MCF 10A (cell line): ENCODE measurements at regions of chr7 and their contacts with region 1.

Region 1: DNA sequence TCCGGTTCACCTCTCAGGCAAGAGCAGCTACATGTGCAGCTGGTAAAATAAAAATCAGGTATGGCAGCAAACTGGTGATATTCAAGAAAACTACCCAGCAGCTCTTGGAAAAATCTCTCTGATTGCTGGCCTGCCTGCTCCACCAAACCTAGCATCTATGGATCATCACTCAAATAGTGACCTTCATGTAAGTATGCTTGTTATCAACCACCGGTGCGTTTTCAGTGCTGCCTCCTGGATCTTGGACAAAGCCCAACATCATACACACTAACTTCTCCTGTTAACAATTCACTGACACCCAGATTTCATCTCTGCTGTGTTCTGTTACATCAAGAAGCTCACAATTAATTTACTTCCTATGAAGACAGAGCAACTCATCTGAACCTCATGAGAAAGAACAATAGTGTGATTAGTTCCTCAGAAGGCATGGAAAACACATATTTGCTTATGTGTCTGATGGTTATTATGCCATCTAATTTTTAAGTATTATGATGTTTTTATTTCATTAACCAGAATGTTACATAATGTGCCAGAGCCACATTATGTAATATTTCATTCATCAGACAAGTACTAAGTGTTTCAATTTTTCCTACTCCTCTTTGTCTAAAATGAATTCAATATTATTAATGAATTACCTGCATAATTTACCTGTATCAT is 8.8 kb downstream of the CDK6 start:
- DNase-seq: no peak
- H3K4me3 Mint-ChIP-seq: no peak overlapping the region
- H3K27ac Mint-ChIP-seq: peak overlapping the region; percentile 3
- H3K4me1 Mint-ChIP-seq: peaks cover 64% of the 10 kb centered on the region
- H3K27me3 Mint-ChIP-seq: no peaks in the 10 kb centered on the region
- CTCF ChIP-seq: no peak

Region 2: GRCh38 chr7:92815412-92815811 is 12.2 kb before region 1 on chr7:
- CTCF ChIA-PET with region 1: interaction called, 16 read pairs
- POLR2A ChIA-PET with region 1: interaction called, 23 read pairs
- intact Hi-C with region 1: no loop called
- DNase-seq: no peak
- H3K4me3 Mint-ChIP-seq: no peak overlapping the region
- H3K27ac Mint-ChIP-seq: no peak overlapping the region
- H3K4me1 Mint-ChIP-seq: peaks cover 18% of the 10 kb centered on the region
- H3K27me3 Mint-ChIP-seq: no peaks in the 10 kb centered on the region
- CTCF ChIP-seq: no peak

Region 3: DNA sequence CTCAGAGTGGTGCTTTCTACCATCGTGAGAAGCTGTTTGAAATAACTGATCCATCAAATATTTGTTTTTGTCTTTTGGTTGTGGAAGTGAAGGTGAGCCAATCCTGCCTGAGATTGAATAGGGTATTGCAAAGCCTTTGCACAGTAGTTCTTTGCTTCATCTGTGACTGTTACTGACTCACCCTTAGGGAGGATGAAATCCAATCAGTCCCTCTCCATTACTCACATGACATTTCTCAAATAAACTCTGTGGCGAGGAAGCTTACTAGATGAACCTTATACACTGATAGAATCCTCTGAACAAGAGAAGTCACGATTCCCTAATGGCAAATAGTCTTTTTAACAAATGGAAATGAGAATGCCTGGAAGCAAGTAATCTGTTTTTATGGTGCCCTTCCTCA is 366.8 kb after region 1 on chr7:
- CTCF ChIA-PET with region 1: no interaction called
- POLR2A ChIA-PET with region 1: no interaction called
- intact Hi-C with region 1: no loop called
- DNase-seq: peak; percentile 21
- H3K4me3 Mint-ChIP-seq: no peak overlapping the region
- H3K27ac Mint-ChIP-seq: no peak overlapping the region
- H3K4me1 Mint-ChIP-seq: no peaks in the 10 kb centered on the region
- H3K27me3 Mint-ChIP-seq: peaks cover 100% of the 10 kb centered on the region
- CTCF ChIP-seq: no peak